ENCODE measurements at regions of chr14 and their contacts with region 1.

Region 1: DNA sequence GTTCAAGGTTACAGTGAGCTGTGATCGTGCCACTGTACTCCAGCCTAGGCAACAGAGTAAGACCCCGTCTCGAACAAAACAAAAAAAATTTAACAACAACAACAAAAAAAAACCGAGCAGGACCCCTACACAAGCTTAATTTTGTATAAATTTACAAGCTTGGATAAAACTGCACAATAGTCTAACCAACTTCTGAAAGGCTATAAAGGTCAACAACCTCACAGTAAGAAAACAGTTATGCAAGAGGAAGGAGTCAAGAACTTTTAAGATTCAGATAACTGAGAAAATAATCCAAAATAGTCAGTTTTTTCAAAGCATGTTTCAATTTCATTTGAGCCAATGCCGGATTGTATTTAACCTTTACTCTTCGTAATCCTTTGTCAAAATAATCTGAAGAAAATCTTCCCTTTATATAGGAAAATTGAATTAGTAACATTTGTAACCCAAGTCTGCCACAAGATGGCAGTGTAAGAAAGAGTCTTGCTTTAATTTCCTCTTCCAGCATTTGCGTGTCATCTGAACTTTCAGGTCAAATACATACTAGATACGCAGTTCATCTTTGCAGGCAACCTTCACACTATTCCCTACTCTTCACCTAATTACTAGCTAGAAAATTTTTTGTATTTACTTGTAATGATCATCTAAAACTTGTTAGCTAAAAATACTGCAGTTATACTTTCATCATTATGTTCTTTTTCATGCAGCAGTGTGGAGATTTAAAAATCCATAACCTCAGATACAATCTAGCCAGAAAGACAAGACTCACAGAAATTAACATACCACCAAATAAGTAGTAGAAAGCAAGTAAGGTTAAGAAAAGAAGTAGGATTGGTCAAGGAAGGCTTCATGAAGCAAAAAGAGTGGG is 5.8 kb downstream of the CCNB1IP1 start:
- DNase-seq: no peak
- H3K4me3 ChIP-seq: no peak overlapping the region
- CTCF ChIP-seq: peak; percentile 40

Region 2: GRCh38 chr14:20350860-20351259 is 23.6 kb after region 1 on chr14:
- CTCF ChIA-PET with region 1: interaction called, 90 read pairs
- POLR2A ChIA-PET with region 1: no interaction called
- DNase-seq: no peak
- H3K4me3 ChIP-seq: no peak overlapping the region
- CTCF ChIP-seq: peak; percentile 24

Region 3: DNA sequence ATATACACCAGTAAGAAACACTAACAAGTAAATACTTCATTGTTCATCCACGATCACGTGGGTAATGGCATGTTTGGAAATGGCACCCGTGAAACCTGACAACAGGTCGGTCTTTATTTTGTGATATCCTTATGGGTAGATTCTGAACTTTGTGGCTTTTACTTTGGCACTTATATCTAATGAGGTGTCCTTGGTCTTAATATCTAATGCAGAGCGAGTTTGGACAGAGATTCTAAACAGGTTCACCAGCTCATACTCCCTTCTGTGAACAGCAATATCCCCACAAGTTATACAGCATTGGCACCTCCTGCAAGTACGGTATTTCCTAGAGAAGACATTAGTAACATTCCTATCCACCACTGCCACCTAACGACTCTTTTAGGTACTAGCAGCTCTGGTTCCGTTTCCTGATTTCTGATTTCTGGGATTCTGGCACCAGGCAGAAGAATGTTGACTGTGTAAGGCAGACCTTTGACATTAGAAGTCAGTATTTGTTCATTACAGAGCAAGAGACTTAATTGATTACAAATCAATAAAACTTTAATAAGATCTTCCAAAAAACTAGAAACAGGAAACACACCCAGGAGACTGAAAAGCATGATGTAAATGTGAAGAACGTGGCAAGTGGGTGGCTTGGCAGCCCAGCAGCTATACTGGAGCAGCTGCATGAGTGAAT is 363.7 kb after region 1 on chr14:
- CTCF ChIA-PET with region 1: interaction called, 62 read pairs
- POLR2A ChIA-PET with region 1: no interaction called
- DNase-seq: no peak
- H3K4me3 ChIP-seq: no peak overlapping the region
- CTCF ChIP-seq: peak; percentile 76

Measured in AG04449 (cell line).